Cardiac septum (tissue), 1 donor: ENCODE measurements at regions of chr2 and their contacts with region 1.

Region 1: GRCh38 chr2:25851740-25852503 is 26.4 kb downstream of the ASXL2 start:
- DNase-seq: no peak

Region 2: GRCh38 chr2:25951071-25951547 is 99.2 kb after region 1 on chr2:
- intact Hi-C with region 1: loop called (anchors 5 kb)
- DNase-seq: peak; percentile 91